Ascending aorta (tissue), 2 donors: ENCODE measurements at regions of chr3 and their contacts with region 1.

Region 1: GRCh38 chr3:149812606-149813366 is at the start of gene RNF13:
- DNase-seq: peak; percentile 95 to 99
- H3K4me3 ChIP-seq: peak within 1 kb of the TSS; percentile 79 to 85
- H3K27ac ChIP-seq: peak within 1 kb of the TSS; percentile 99
- H3K4me1 ChIP-seq: peaks cover 0 to 29% of the 10 kb centered on the region in 2 donors
- H3K27me3 ChIP-seq: no peaks in the 10 kb centered on the region
- CTCF ChIP-seq: no peak
- total RNA-seq, gene RNF13: 69.3 TPM

Region 2: GRCh38 chr3:149512209-149512782 is 300.5 kb before region 1 on chr3:
- intact Hi-C with region 1: loop called (anchors 5 kb)
- DNase-seq: peak in 1 of 2 donors; percentile 83
- H3K4me3 ChIP-seq: no peak overlapping the region
- H3K27ac ChIP-seq: no peak overlapping the region
- H3K4me1 ChIP-seq: peaks cover 1 to 20% of the 10 kb centered on the region in 2 donors
- H3K27me3 ChIP-seq: no peaks in the 10 kb centered on the region
- CTCF ChIP-seq: peak; percentile 66 to 85 (median 71)

Region 3: DNA sequence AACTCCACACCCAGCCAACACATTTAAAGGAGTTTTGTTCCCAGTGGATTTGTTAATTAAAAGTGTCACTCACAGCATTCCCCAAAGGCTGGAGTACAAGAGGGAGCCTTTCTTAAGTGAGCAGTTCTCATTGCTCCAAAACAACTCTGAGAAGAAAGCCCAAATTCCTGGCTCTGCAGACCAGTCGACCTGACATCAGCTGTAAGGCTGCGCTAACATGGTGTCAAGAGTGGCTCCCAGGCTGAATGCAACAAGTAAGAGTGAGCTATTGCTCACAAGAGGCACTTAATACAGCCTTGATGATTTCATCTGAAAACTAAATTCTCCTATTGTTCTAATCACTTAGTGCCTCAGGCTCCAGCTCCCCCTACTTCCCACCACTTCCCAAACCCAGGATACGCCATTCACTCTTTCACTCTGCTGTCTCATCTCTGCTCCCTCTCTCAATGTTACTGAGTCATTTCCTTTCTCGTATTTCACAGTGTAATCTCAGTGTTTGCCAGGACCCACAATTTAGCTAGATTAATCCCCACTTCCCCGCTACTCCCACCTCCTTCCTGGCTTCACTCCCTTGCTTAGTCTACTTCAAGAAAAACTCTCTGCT is 236.7 kb before region 1 on chr3:
- intact Hi-C with region 1: no loop called
- DNase-seq: peak in 1 of 2 donors; percentile 84
- H3K4me3 ChIP-seq: peak overlapping the region in 1 of 2 donors; percentile 35
- H3K27ac ChIP-seq: peak overlapping the region; percentile 93 to 94
- H3K4me1 ChIP-seq: peaks cover 16 to 83% of the 10 kb centered on the region in 2 donors
- H3K27me3 ChIP-seq: no peaks in the 10 kb centered on the region
- CTCF ChIP-seq: no peak

Region 4: GRCh38 chr3:149752051-149752787 is 60.6 kb before region 1 on chr3 and contains the start of gene COMMD2:
- intact Hi-C with region 1: loop called (anchors 1 kb)
- DNase-seq: peak; percentile 14 to 82
- H3K4me3 ChIP-seq: peak within 1 kb of the TSS; percentile 67 to 82
- H3K27ac ChIP-seq: peak within 1 kb of the TSS; percentile 67 to 73
- H3K4me1 ChIP-seq: peaks cover 4 to 5% of the 10 kb centered on the region in 2 donors
- H3K27me3 ChIP-seq: no peaks in the 10 kb centered on the region
- CTCF ChIP-seq: peak in 1 of 3 experiments; percentile 36
- total RNA-seq, gene COMMD2: 39.6 TPM

Region 5: GRCh38 chr3:149765762-149766334 is 46.9 kb before region 1 on chr3:
- intact Hi-C with region 1: loop called (anchors 1 kb)
- DNase-seq: no peak
- H3K4me3 ChIP-seq: no peak overlapping the region
- H3K27ac ChIP-seq: no peak overlapping the region
- H3K4me1 ChIP-seq: no peaks in the 10 kb centered on the region
- H3K27me3 ChIP-seq: no peaks in the 10 kb centered on the region
- CTCF ChIP-seq: peak; percentile 34 to 55 (median 46)